OCI-LY7 (cell line): ENCODE measurements at regions of chr2 and their contacts with region 1.

Region 1: DNA sequence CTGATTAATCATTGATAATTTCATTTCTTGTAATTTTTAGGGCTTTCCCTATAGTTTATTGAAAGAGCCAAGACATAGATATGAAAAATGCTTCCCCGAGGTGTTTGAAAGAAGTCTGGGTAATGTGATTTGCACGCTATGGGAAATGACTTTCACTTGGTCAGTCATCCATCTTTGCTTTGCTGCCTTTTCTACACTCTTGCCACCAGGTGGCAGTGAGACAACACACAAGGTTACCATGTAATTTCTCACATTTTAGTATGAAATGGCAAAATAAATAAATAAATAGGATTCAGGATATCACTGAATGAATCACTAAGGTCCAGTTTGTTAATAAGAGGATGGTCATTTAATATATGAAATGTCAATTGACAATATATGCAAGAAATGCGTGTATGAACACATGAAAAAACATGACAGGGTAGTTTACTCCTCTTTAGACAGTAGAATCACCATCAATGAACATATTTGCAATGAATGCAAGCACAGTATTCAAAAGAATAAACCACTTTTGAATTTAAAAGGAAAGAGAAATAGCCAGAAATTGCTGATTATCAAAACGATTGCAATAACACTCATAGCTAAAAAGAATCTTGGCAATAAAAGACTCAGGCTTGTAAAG is 52.2 kb upstream of the KCNH7 start:
- DNase-seq: peak; percentile 40
- H3K4me3 ChIP-seq: no peak overlapping the region
- H3K27ac ChIP-seq: no peak overlapping the region
- H3K4me1 ChIP-seq: no peaks in the 10 kb centered on the region
- CTCF ChIP-seq: peak; percentile 94

Region 2: GRCh38 chr2:163132850-163133249 is 242.0 kb after region 1 on chr2:
- CTCF ChIA-PET with region 1: no interaction called
- POLR2A ChIA-PET with region 1: no interaction called
- intact Hi-C with region 1: loop called (anchors 5 kb)
- DNase-seq: no peak
- H3K4me3 ChIP-seq: no peak overlapping the region
- H3K27ac ChIP-seq: no peak overlapping the region
- H3K4me1 ChIP-seq: no peaks in the 10 kb centered on the region
- CTCF ChIP-seq: peak; percentile 68